ENCODE measurements at regions of chr5 and their contacts with region 1.

Region 1: DNA sequence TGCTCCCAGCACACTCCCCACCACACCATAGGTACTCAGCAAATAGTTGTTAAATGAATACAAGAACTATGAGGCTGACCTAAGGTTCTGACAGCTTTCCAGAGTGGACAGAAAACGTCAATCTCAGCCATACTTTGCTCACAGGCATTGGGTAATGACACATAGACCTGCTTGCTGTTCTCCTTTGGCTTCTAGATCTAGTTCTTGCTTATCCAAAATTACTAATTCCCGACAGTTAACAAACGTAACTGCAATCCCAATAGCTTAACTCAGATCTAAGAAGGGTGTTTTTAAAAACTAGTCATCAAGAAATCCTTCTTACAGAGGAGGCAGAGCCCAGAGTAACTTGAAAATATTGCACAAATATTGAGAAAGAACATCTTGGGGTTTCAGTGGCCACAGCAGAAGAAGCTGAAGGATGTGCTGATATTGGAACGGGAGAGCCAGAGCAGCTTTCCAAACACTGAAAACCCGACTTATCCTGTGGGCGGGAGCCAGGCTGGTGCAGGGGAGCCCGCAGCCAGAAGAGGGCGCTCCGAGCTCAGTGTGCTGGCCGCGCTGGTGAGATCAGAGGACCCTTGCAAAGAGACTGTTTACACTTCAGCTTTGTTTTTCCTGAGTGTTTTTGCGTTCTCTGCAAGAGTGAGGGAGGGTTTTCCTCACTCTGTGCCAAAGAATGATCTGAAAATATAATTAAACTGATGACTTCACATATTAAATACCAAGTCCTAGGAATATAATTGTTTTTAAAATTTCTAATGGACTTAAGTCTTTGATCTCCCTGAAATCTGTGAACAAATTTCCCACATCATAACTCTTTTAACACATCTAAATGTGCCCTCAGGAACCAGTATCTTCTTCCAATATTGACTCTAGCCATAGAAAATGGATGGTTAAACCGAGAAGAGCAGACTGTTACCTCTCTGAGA is 30.3 kb downstream of the FGF1 start:
- DNase-seq: no peak
- H3K4me3 ChIP-seq: no peak overlapping the region
- CTCF ChIP-seq: peak; percentile 99

Region 2: DNA sequence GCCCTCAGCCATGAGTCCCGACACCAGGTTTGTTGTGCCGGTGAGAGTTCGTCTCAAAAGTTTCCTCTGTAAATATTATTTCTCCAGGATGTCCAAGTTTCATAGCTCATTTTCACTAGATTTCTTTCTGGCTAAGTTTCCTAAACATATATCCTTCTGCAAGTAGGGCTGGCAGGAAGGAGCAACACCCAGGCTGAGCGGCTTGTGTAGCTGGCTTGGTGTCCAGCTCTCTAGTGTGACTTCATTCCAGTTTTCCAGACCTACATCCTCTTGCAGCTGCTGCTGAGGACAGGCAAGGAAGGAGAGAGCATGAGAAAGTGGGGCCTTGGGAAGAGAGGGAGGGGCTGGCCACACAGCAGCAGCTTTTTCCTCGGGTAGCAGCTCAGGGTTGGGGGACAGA is 50.0 kb before region 1 on chr5:
- CTCF ChIA-PET with region 1: interaction called, 208 read pairs
- POLR2A ChIA-PET with region 1: no interaction called
- DNase-seq: no peak
- H3K4me3 ChIP-seq: no peak overlapping the region
- CTCF ChIP-seq: no peak

Region 3: GRCh38 chr5:142618130-142618523 is 37.5 kb before region 1 on chr5:
- CTCF ChIA-PET with region 1: interaction called, 208 read pairs
- POLR2A ChIA-PET with region 1: interaction called, 3 read pairs
- DNase-seq: no peak
- H3K4me3 ChIP-seq: no peak overlapping the region
- CTCF ChIP-seq: no peak

Region 4: DNA sequence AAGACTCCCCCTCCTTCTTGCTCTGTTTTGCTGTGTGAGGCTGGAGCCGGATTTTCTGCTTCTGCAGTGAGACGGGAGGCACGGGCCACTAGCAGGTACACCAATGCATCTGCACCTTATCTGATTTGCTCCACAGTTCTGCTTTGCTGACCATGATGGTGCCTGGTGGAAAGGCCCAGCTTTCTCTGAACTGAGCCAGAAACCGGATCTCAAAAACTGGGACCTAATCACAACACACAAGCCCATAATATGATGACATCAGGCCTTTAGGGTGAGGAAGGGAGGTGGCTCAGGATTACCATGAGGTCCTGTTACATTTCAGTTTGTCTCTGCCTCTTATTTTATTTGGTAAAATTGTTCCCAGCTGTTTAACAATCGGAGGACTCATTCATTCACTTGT is 19.5 kb before region 1 on chr5:
- CTCF ChIA-PET with region 1: interaction called, 117 read pairs
- POLR2A ChIA-PET with region 1: no interaction called
- DNase-seq: no peak
- H3K4me3 ChIP-seq: no peak overlapping the region
- CTCF ChIP-seq: no peak

Region 5: GRCh38 chr5:142674531-142675469 is 19.2 kb after region 1 on chr5:
- CTCF ChIA-PET with region 1: interaction called, 51 read pairs
- POLR2A ChIA-PET with region 1: interaction called, 6 read pairs
- DNase-seq: peak; percentile 26
- H3K4me3 ChIP-seq: no peak overlapping the region
- CTCF ChIP-seq: no peak

Region 6: GRCh38 chr5:142699184-142699720 is 43.6 kb after region 1 on chr5:
- CTCF ChIA-PET with region 1: interaction called, 482 read pairs
- POLR2A ChIA-PET with region 1: interaction called, 7 read pairs
- DNase-seq: no peak
- H3K4me3 ChIP-seq: no peak overlapping the region
- CTCF ChIP-seq: peak; percentile 87

Region 7: GRCh38 chr5:142888469-142889085 is 233.0 kb after region 1 on chr5:
- CTCF ChIA-PET with region 1: interaction called, 11 read pairs
- POLR2A ChIA-PET with region 1: no interaction called
- DNase-seq: no peak
- H3K4me3 ChIP-seq: no peak overlapping the region
- CTCF ChIP-seq: peak; percentile 45

Region 8: GRCh38 chr5:144308906-144309670 is 1653.5 kb after region 1 on chr5:
- CTCF ChIA-PET with region 1: no interaction called
- POLR2A ChIA-PET with region 1: no interaction called
- DNase-seq: no peak
- H3K4me3 ChIP-seq: no peak overlapping the region
- CTCF ChIP-seq: no peak

Measured in AG04449 (cell line).